ENCODE measurements at regions of chr15 and their contacts with region 1.

Region 1: GRCh38 chr15:45205192-45205591 is 17.4 kb upstream of the SHF start:
- DNase-seq: peak; percentile 74
- H3K4me3 ChIP-seq: no peak overlapping the region; a peak in 1 of 4 replicates
- H3K27ac ChIP-seq: no peak overlapping the region
- H3K4me1 ChIP-seq: no peaks in the 10 kb centered on the region; a peak in 1 of 4 replicates
- H3K27me3 ChIP-seq: no peaks in the 10 kb centered on the region
- CTCF ChIP-seq: peak; percentile 90
- EP300 ChIP-seq: no peak
- RAD21 ChIP-seq: peak; percentile 91

Region 2: DNA sequence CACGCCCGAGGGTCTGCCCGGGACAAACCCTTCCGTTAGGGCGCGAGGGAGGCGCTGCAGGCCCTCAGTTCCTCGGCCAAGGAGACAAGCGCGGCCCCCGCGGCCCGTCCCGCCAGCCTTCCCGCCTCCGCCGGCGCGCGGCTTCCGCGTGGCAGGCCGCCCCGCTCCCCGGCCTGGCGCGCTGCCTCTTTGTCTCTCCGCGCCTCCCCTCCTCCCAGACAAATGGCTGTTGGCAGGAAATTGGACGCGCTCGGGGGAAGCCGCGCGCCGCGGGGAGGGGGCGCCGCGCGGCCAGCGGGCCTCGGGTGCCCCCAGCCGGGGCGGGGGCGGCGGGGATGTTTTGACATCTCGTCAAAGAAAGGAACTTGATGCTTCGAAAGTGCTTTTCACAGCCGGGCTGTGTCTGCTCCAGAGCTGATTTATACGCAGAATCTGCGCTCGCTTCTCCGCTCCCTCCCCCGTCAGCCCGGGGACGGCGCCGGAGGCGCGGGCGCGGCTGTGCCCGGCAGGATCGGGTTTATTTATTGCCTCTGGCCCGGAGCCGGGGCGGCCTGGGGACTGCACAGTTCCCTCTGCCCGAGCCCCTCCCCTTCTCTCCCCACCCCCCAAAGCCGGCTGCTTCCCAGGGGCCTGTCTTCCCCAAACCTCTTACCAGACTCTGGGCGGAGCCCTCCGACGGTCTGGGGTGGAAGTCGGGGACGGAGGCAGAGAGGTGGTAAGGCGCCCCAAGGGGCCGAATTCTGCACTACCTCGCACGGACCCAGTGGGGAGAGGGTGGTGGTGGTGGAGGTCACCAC is 38.2 kb before region 1 on chr15:
- CTCF ChIA-PET with region 1: interaction called, 226 read pairs
- POLR2A ChIA-PET with region 1: interaction called, 31 read pairs
- DNase-seq: peak; percentile 83
- H3K4me3 ChIP-seq: peak overlapping the region; percentile 54 to 72
- H3K27ac ChIP-seq: peak overlapping the region; percentile 84 to 100
- H3K4me1 ChIP-seq: peaks cover 16 to 65% of the 10 kb centered on the region in 2 experiments
- H3K27me3 ChIP-seq: no peaks in the 10 kb centered on the region
- CTCF ChIP-seq: peak; percentile 62
- EP300 ChIP-seq: 0 out of 4 replicates have a peak, but pooled peaks have one; percentile 2 to 22
- RAD21 ChIP-seq: peak; percentile 17; the same call in 1 of the 2 replicates

Region 3: GRCh38 chr15:45221967-45222366 is 16.8 kb after region 1 on chr15:
- CTCF ChIA-PET with region 1: interaction called, 30 read pairs
- POLR2A ChIA-PET with region 1: no interaction called
- DNase-seq: no peak
- H3K4me3 ChIP-seq: no peak overlapping the region
- H3K27ac ChIP-seq: no peak overlapping the region
- H3K4me1 ChIP-seq: no peaks in the 10 kb centered on the region
- H3K27me3 ChIP-seq: peaks cover 5% of the 10 kb centered on the region; the same call in 1 of the 2 replicates
- CTCF ChIP-seq: no peak
- EP300 ChIP-seq: no peak
- RAD21 ChIP-seq: no peak

Region 4: GRCh38 chr15:45268135-45268534 is 62.9 kb after region 1 on chr15:
- CTCF ChIA-PET with region 1: interaction called, 19 read pairs
- POLR2A ChIA-PET with region 1: no interaction called
- DNase-seq: no peak
- H3K4me3 ChIP-seq: no peak overlapping the region
- H3K27ac ChIP-seq: no peak overlapping the region
- H3K4me1 ChIP-seq: no peaks in the 10 kb centered on the region
- H3K27me3 ChIP-seq: no peaks in the 10 kb centered on the region
- CTCF ChIP-seq: no peak
- EP300 ChIP-seq: no peak
- RAD21 ChIP-seq: no peak

Region 5: DNA sequence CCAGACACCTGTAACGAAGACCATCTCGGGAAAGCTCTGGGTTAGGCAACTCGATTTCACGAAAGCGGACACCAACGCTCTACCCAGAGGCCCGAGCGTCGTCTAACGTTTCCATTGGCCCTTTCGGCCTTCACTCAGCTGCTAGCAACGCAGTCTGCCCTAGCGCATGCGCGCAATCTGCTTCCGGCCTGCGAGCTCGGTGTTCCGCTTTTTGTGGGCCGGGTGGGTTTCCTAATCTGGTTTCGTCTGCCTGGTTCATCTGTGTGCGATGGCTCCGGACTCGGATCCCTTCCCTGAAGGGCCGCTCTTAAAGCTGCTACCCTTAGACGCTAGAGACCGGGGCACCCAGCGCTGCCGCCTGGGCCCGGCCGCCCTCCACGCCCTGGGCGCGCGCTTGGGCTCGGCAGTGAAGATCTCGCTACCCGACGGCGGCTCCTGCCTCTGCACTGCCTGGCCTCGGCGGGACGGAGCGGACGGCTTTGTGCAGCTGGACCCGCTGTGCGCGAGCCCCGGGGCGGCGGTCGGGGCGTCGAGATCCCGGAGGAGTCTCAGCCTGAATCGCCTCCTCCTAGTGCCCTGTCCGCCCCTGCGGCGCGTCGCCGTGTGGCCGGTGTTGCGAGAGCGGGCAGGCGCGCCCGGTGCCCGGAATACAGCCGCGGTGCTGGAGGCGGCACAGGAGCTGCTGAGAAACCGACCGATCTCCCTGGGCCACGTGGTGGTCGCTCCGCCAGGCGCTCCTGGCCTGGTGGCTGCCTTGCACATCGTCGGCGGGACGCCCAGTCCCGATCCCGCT is 197.2 kb after region 1 on chr15:
- CTCF ChIA-PET with region 1: interaction called, 37 read pairs
- POLR2A ChIA-PET with region 1: interaction called, 4 read pairs
- DNase-seq: peak; percentile 94
- H3K4me3 ChIP-seq: peak overlapping the region; percentile 95 to 98
- H3K27ac ChIP-seq: peak overlapping the region; percentile 84 to 93
- H3K4me1 ChIP-seq: peaks cover 5 to 8% of the 10 kb centered on the region in 2 experiments; a peak in 3 of 4 replicates
- H3K27me3 ChIP-seq: no peaks in the 10 kb centered on the region
- CTCF ChIP-seq: no peak; the same call in 1 of the 2 replicates
- EP300 ChIP-seq: no peak
- RAD21 ChIP-seq: no peak